PC-3 (cell line): ENCODE measurements at regions of chr4 and their contacts with region 1.

Region 1: GRCh38 chr4:43374216-43374751 is 481.8 kb downstream of the GRXCR1 start:
- DNase-seq: no peak
- ATAC-seq: no peak
- H3K4me3 ChIP-seq: no peak overlapping the region
- H3K27ac ChIP-seq: no peak overlapping the region
- H3K4me1 ChIP-seq: no peaks in the 10 kb centered on the region
- H3K27me3 ChIP-seq: no peaks in the 10 kb centered on the region
- CTCF ChIP-seq: no peak

Region 2: GRCh38 chr4:43316813-43317212 is 57.5 kb before region 1 on chr4:
- CTCF ChIA-PET with region 1: no interaction called
- POLR2A ChIA-PET with region 1: no interaction called
- intact Hi-C with region 1: no loop called
- DNase-seq: peak; percentile 84
- ATAC-seq: peak; percentile 97
- H3K4me3 ChIP-seq: no peak overlapping the region
- H3K27ac ChIP-seq: peak overlapping the region; percentile 40
- H3K4me1 ChIP-seq: peaks cover 17% of the 10 kb centered on the region
- H3K27me3 ChIP-seq: no peaks in the 10 kb centered on the region
- CTCF ChIP-seq: no peak

Region 3: GRCh38 chr4:43348591-43348990 is 25.7 kb before region 1 on chr4:
- CTCF ChIA-PET with region 1: no interaction called
- POLR2A ChIA-PET with region 1: no interaction called
- intact Hi-C with region 1: no loop called
- DNase-seq: peak; percentile 43
- ATAC-seq: peak; percentile 43
- H3K4me3 ChIP-seq: no peak overlapping the region
- H3K27ac ChIP-seq: 0 out of 2 replicates have a peak overlapping the region, but pooled peaks have one; percentile 6
- H3K4me1 ChIP-seq: peaks cover 27% of the 10 kb centered on the region
- H3K27me3 ChIP-seq: no peaks in the 10 kb centered on the region
- CTCF ChIP-seq: no peak

Region 4: DNA sequence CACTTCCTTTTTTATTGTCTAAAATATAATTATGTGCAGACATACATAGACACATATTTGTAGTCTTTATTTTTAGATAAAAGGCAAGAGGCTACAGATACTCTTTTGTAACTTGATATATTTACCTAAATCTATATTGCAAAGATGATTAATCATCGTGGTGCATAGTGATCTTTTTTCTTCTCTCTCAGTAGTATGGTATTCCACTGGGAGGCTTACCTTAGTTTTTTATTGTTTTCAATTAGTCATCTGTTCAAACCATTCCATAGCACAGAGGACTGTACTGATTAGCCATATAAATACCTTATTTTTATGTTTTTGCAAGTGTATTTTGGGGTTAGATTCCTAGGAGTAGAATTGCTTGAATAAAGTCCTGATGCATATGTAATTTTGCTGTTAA is 138.0 kb after region 1 on chr4:
- CTCF ChIA-PET with region 1: no interaction called
- POLR2A ChIA-PET with region 1: no interaction called
- intact Hi-C with region 1: no loop called
- DNase-seq: peak; percentile 80
- ATAC-seq: peak; percentile 100
- H3K4me3 ChIP-seq: no peak overlapping the region
- H3K27ac ChIP-seq: peak overlapping the region; percentile 2; the same call in 1 of the 2 replicates
- H3K4me1 ChIP-seq: 0 out of 2 replicates have a peak, but pooled peaks cover 4% of the 10 kb centered on the region
- H3K27me3 ChIP-seq: no peaks in the 10 kb centered on the region
- CTCF ChIP-seq: no peak

Region 5: GRCh38 chr4:43525646-43526045 is 151.4 kb after region 1 on chr4:
- CTCF ChIA-PET with region 1: no interaction called
- POLR2A ChIA-PET with region 1: no interaction called
- intact Hi-C with region 1: no loop called
- DNase-seq: no peak
- ATAC-seq: no peak
- H3K4me3 ChIP-seq: no peak overlapping the region
- H3K27ac ChIP-seq: no peak overlapping the region
- H3K4me1 ChIP-seq: no peaks in the 10 kb centered on the region
- H3K27me3 ChIP-seq: no peaks in the 10 kb centered on the region
- CTCF ChIP-seq: no peak

Region 6: GRCh38 chr4:43918377-43918776 is 544.1 kb after region 1 on chr4:
- CTCF ChIA-PET with region 1: no interaction called
- POLR2A ChIA-PET with region 1: interaction called, 10 read pairs
- intact Hi-C with region 1: no loop called
- DNase-seq: no peak
- ATAC-seq: no peak
- H3K4me3 ChIP-seq: no peak overlapping the region
- H3K27ac ChIP-seq: no peak overlapping the region
- H3K4me1 ChIP-seq: no peaks in the 10 kb centered on the region
- H3K27me3 ChIP-seq: no peaks in the 10 kb centered on the region
- CTCF ChIP-seq: no peak